ENCODE measurements at regions of chr16 and their contacts with region 1.

Region 1: GRCh38 chr16:55944377-55944802 is 69.2 kb upstream of the CES5A start:
- DNase-seq: peak; percentile 19
- H3K4me3 ChIP-seq: no peak overlapping the region
- H3K27ac ChIP-seq: no peak overlapping the region
- H3K4me1 ChIP-seq: no peaks in the 10 kb centered on the region
- H3K27me3 ChIP-seq: no peaks in the 10 kb centered on the region
- CTCF ChIP-seq: peak; percentile 93 to 96

Region 2: DNA sequence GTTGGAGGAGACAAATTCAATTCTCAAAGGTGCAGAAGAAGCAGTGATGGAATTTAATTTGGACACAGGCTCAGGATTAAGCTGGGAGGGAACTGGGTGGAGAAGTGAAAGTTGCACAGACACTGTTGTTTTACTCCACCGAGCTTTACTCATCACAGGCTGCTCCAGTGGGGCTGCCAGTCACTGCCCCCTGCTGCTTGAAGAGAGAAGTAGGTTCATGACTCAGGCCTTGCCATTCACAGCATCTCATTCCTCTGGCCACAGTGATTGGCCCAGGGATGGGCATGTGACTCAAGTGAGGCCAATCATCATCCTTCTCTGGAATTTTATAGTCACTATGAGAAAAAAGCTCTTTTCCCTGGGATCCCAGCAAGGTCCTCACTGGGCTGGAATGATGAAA is 258.7 kb after region 1 on chr16:
- CTCF ChIA-PET with region 1: no interaction called
- dilution Hi-C with region 1: no loop called
- in situ Hi-C with region 1: no loop called
- intact Hi-C with region 1: loop called (anchors 10 kb)
- DNase-seq: peak; percentile 12
- H3K4me3 ChIP-seq: no peak overlapping the region
- H3K27ac ChIP-seq: no peak overlapping the region
- H3K4me1 ChIP-seq: no peaks in the 10 kb centered on the region
- H3K27me3 ChIP-seq: peaks cover 2% of the 10 kb centered on the region
- CTCF ChIP-seq: peak; percentile 24 to 33

Region 3: GRCh38 chr16:56281256-56281805 is 336.9 kb after region 1 on chr16:
- CTCF ChIA-PET with region 1: no interaction called
- dilution Hi-C with region 1: no loop called
- in situ Hi-C with region 1: no loop called
- intact Hi-C with region 1: loop called (anchors 1 kb)
- DNase-seq: no peak
- H3K4me3 ChIP-seq: no peak overlapping the region
- H3K27ac ChIP-seq: no peak overlapping the region
- H3K4me1 ChIP-seq: no peaks in the 10 kb centered on the region
- H3K27me3 ChIP-seq: no peaks in the 10 kb centered on the region
- CTCF ChIP-seq: peak; percentile 18 to 54

Region 4: GRCh38 chr16:56324406-56324805 is 380.0 kb after region 1 on chr16:
- CTCF ChIA-PET with region 1: no interaction called
- dilution Hi-C with region 1: no loop called
- in situ Hi-C with region 1: loop called (anchors 10 kb)
- intact Hi-C with region 1: no loop called
- DNase-seq: peak; percentile 93
- H3K4me3 ChIP-seq: no peak overlapping the region
- H3K27ac ChIP-seq: no peak overlapping the region
- H3K4me1 ChIP-seq: peaks cover 18% of the 10 kb centered on the region
- H3K27me3 ChIP-seq: no peaks in the 10 kb centered on the region
- CTCF ChIP-seq: no peak